ENCODE measurements at regions of chr6 and their contacts with region 1.

Region 1: GRCh38 chr6:12403201-12403826 is 113.2 kb downstream of the EDN1 start:
- DNase-seq: no peak

Region 2: DNA sequence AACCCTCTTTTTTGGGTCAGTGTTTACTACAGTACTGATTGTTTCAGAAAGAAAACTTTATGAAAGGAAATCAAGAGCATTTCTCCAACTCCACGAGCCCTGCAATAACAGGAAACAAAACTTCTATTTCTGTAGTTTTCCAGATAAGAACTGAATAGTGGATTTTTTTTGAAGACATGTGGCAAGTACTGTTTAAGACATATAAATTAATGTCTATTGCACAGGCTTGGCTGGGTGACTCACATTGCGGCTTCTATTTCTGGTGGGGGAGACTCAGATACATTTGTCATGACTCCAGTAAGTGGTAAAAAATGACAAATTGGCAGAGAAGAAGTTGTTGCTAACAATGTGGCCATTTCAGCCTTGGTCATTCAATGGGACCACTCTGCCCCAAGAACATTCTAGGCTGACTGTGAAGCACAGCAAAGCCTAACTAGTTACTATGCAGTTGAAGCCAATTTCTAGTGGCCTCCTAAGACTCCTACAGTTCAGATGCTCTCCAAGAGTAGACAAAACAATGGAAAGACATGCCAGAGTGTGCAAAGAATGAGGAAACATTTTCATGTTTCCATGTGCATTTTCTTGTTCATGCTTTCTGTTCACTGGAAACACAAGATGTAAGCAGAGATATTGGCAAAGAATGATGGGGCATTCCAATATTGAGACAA is 87.7 kb after region 1 on chr6:
- intact Hi-C with region 1: loop called (anchors 5 kb)
- DNase-seq: no peak